BJ (cell line): ENCODE measurements at regions of chrX and their contacts with region 1.

Region 1: DNA sequence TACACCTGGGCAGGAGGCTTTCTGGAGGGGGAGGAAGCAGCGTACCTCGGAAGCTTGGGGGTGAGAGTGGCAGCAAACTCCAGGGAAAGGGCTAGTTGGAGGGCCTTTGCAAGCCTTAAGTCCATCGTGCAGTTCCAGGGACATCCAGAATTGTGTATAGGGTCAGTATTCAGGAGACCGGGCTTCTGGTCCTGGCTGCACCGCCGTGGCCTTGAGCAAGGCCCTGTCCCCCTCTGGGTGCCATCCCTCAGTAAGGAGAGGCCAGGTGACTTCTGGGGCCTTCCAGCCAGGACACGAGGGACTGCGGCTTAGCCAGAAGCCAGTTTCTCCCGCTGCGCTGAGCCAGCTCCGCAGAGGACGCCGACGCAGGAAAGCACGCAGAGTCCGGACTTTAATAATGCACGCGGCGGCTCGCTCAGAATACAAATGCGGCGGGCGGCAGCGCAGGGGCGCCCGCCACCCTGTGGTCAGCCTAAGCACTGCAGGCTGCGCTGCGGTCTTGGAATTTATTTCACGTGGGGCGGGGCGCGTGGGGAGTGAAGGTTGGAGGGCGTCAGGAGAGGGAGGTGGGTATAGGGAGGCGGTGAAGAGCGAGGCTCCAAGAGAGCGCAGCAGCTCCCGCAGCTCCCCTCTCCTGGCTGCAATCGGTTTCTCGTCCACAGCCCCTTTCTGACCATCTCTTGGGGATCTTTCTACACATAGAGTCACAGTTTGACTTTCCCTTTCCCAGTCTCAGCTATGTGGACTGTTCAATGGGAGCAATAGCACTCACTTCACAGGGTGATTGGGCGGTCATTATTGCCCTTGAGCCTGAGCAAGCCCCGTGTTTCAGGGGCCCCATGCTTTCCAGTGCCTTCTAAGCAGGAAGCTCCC is 94.1 kb upstream of the GPR50 start:
- DNase-seq: no peak
- H3K4me3 ChIP-seq: 0 out of 2 replicates have a peak overlapping the region, but pooled peaks have one; percentile 8
- H3K27me3 ChIP-seq: no peaks in the 10 kb centered on the region
- CTCF ChIP-seq: peak; percentile 85

Region 2: DNA sequence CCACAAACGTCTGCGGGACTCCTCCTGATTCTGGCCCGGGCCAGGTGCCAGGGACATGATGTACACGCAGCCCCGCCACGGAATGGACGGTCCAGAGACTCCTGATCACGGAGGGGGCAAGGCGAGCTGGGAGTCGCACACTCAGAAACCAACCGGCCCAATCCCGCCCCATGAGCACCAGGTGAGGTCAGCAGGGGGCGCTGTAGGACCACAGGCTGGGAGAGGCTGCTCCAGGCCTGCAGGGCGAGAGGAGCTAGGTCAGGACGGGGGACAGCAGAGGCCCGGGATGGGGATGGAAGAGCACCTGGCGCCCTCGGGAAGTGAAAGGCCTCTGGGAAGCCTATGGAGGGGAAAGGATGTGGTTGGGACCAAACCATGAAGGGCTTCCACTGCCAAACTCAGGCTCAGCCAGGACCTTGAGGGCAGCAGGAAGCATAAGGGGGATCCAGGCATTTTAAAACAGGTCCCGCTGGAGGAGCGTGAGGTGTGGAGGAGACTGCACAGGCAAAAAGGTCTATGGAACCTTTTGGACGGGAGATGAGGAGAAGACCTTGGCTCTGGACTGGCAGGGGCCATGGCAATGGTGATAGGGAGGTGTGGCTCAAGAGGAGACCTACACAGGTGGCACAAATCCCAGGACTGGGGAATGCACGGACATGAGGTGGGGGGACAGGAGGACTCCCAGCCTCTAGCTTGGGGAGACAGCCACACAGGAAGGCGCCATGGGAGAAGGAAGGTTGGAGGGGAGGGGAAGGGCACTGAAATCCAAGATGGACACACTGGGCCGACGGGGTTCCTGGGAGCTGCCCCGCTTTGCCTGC is 310.0 kb before region 1 on chrX:
- CTCF ChIA-PET with region 1: interaction called, 91 read pairs
- POLR2A ChIA-PET with region 1: no interaction called
- DNase-seq: no peak
- H3K4me3 ChIP-seq: no peak overlapping the region
- H3K27me3 ChIP-seq: no peaks in the 10 kb centered on the region
- CTCF ChIP-seq: peak; percentile 85

Region 3: DNA sequence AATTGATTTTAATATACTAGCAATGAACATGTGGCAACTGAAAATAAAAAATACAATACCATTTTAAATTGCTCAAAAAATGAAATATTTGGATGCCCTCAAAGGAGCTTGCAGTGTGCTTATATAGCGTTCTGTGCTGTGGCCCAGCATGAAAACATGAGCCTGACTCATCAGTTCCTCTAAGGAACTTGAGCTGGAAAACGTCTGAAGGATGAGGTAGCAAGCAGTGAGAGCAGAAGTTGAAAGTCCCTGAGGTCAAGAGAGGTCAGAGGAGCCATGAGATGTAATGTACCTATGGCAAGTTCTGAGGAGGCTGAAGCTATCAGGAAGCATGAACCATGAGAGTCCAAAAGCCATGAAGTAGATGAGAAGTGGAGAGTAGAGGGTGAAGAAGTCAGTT is 39.5 kb before region 1 on chrX:
- CTCF ChIA-PET with region 1: no interaction called
- POLR2A ChIA-PET with region 1: interaction called, 16 read pairs
- DNase-seq: no peak
- H3K4me3 ChIP-seq: no peak overlapping the region
- H3K27me3 ChIP-seq: no peaks in the 10 kb centered on the region; the same call in 1 of the 2 replicates
- CTCF ChIP-seq: no peak